Sigmoid colon (tissue), 7 donors: ENCODE measurements at regions of chr2 and their contacts with region 1.

Region 1: DNA sequence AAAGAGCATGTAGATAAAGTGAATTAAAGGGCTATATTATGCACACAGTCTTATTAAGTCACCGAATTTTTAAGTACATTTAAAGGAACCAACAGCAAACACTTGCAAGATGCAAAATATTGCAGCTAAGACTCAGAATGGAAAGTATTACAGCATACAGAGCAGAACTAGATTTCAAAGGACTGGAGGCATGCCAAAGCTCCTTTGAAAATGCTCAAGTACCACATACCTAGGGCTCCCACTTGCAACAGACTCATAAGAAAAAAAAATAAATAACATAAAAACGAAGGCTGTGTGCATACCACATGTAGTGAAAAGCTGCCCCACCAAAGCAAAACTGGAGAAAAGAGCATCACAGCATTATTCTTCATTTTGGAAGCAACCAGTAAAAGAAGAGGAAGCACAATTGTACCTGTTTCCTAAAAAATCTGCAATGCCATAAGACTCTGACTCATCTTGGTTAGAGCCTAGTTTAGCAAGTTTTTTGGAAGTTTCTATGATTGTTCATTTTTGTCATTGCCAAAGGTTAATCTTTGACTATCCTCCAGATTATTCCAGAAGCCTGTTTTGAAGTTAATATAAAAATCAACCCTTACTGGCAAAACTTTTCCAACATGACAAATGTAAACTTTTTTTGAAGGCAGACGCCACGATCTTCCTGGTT is 306.0 kb upstream of the COL3A1 start:
- DNase-seq: peak; percentile 59
- H3K4me3 ChIP-seq: no peak overlapping the region
- H3K27ac ChIP-seq: peak overlapping the region in 1 of 4 donors; percentile 38
- H3K4me1 ChIP-seq: peaks cover 0 to 26% (median 12%) of the 10 kb centered on the region in 4 donors
- H3K27me3 ChIP-seq: no peaks in the 10 kb centered on the region
- CTCF ChIP-seq: no peak
- EP300 ChIP-seq: no peak
- POLR2A ChIP-seq: no peak

Region 2: GRCh38 chr2:188529746-188530145 is 138.4 kb before region 1 on chr2:
- intact Hi-C with region 1: loop called (anchors 10 kb)
- DNase-seq: no peak
- H3K4me3 ChIP-seq: no peak overlapping the region
- H3K27ac ChIP-seq: no peak overlapping the region
- H3K4me1 ChIP-seq: peaks cover 0 to 39% (median 23%) of the 10 kb centered on the region in 4 donors
- H3K27me3 ChIP-seq: no peaks in the 10 kb centered on the region
- CTCF ChIP-seq: no peak
- EP300 ChIP-seq: no peak
- POLR2A ChIP-seq: no peak

Region 3: GRCh38 chr2:188580727-188581126 is 87.4 kb before region 1 on chr2:
- intact Hi-C with region 1: no loop called
- DNase-seq: no peak
- H3K4me3 ChIP-seq: no peak overlapping the region
- H3K27ac ChIP-seq: no peak overlapping the region
- H3K4me1 ChIP-seq: peaks cover 0 to 27% (median 19%) of the 10 kb centered on the region in 4 donors
- H3K27me3 ChIP-seq: no peaks in the 10 kb centered on the region
- CTCF ChIP-seq: no peak
- EP300 ChIP-seq: no peak
- POLR2A ChIP-seq: no peak

Region 4: GRCh38 chr2:188966079-188966571 is 298.0 kb after region 1 on chr2:
- intact Hi-C with region 1: no loop called
- DNase-seq: no peak
- H3K4me3 ChIP-seq: no peak overlapping the region
- H3K27ac ChIP-seq: peak overlapping the region; percentile 24 to 58 (median 40)
- H3K4me1 ChIP-seq: peaks cover 0 to 44% (median 29%) of the 10 kb centered on the region in 4 donors
- H3K27me3 ChIP-seq: no peaks in the 10 kb centered on the region
- CTCF ChIP-seq: no peak
- EP300 ChIP-seq: no peak
- POLR2A ChIP-seq: no peak